ENCODE measurements at regions of chr1 and their contacts with region 1.

Region 1: GRCh38 chr1:1374929-1375662 is at the start of gene AURKAIP1:
- DNase-seq: peak; percentile 88
- ATAC-seq: peak; percentile 91
- H3K4me3 Mint-ChIP-seq: peak within 1 kb of the TSS; percentile 90
- H3K27ac Mint-ChIP-seq: peak within 1 kb of the TSS; percentile 92
- H3K4me1 Mint-ChIP-seq: peaks cover 23% of the 10 kb centered on the region
- H3K27me3 Mint-ChIP-seq: no peaks in the 10 kb centered on the region
- CTCF ChIP-seq: no peak
- total RNA-seq, gene AURKAIP1: 91.5 and 105 TPM in 2 replicates

Region 2: GRCh38 chr1:983799-984473 is 391.2 kb before region 1 on chr1:
- CTCF ChIA-PET with region 1: interaction called, 10 read pairs
- POLR2A ChIA-PET with region 1: no interaction called
- intact Hi-C with region 1: no loop called
- DNase-seq: peak; percentile 66
- ATAC-seq: peak; percentile 95
- H3K4me3 Mint-ChIP-seq: no peak overlapping the region
- H3K27ac Mint-ChIP-seq: no peak overlapping the region
- H3K4me1 Mint-ChIP-seq: no peaks in the 10 kb centered on the region
- H3K27me3 Mint-ChIP-seq: peaks cover 23% of the 10 kb centered on the region
- CTCF ChIP-seq: peak; percentile 39

Region 3: DNA sequence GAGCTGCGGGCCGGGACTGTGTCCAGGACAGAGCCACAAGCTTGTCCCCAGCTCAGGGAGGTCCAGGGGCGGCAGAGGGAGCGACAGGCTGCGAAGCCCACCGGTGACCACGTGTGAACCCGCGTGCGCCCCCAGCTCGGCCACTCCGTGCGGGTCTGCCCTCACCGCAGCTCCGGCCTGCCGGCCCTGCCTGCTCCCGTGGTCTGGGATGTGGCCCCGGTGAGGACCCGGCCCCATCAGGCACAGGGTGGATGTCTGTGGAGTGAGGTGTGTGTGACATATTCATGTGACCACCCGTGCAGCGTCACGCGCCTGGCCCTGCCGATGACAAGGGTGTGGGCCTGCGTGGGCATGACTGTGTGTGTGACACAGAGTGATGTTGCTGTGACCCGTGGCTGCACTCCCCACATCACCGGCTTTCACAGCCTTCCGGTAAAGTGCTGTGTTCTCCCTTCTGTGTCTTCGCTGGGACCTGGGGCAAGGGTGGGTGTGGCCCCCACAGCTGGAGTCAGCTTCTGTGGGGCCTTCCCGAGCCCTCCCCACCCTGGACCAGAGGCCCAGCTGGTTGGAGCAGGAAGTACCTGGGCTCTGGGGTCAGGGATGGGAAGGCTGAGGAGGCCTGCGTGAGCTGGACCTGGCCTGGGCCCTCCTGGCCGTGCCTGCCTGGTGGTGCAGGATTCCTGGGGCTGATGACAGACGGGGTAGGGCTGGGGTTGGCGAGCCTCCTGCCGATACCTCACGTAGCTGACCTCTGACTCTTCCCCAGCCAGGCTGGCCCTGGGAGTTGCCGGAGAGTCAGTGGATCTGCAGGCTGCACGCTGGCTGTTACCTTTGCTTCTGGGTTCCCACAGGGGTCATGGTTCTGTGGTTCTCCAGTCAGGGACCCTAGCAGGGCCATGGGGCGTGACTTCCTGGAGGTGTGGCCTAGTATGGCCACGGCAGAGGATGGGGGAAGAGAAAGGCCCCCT is 305.1 kb before region 1 on chr1:
- CTCF ChIA-PET with region 1: no interaction called
- POLR2A ChIA-PET with region 1: no interaction called
- intact Hi-C with region 1: no loop called
- DNase-seq: peak; percentile 45
- ATAC-seq: peak; percentile 19
- H3K4me3 Mint-ChIP-seq: peak overlapping the region; percentile 66
- H3K27ac Mint-ChIP-seq: peak overlapping the region; percentile 81
- H3K4me1 Mint-ChIP-seq: peaks cover 33% of the 10 kb centered on the region
- H3K27me3 Mint-ChIP-seq: peaks cover 7% of the 10 kb centered on the region
- CTCF ChIP-seq: no peak

Region 4: GRCh38 chr1:1115786-1116700 is 259.1 kb before region 1 on chr1 and contains the start of gene C1orf159:
- CTCF ChIA-PET with region 1: no interaction called
- POLR2A ChIA-PET with region 1: interaction called, 4 read pairs
- intact Hi-C with region 1: loop called (anchors 1 kb)
- DNase-seq: peak; percentile 99
- ATAC-seq: peak; percentile 92
- H3K4me3 Mint-ChIP-seq: peak within 1 kb of the TSS; percentile 88
- H3K27ac Mint-ChIP-seq: peak within 1 kb of the TSS; percentile 80
- H3K4me1 Mint-ChIP-seq: peaks cover 9% of the 10 kb centered on the region
- H3K27me3 Mint-ChIP-seq: peaks cover 5% of the 10 kb centered on the region
- CTCF ChIP-seq: no peak
- total RNA-seq, gene C1orf159: 20.8 and 26.5 TPM in 2 replicates

Region 5: DNA sequence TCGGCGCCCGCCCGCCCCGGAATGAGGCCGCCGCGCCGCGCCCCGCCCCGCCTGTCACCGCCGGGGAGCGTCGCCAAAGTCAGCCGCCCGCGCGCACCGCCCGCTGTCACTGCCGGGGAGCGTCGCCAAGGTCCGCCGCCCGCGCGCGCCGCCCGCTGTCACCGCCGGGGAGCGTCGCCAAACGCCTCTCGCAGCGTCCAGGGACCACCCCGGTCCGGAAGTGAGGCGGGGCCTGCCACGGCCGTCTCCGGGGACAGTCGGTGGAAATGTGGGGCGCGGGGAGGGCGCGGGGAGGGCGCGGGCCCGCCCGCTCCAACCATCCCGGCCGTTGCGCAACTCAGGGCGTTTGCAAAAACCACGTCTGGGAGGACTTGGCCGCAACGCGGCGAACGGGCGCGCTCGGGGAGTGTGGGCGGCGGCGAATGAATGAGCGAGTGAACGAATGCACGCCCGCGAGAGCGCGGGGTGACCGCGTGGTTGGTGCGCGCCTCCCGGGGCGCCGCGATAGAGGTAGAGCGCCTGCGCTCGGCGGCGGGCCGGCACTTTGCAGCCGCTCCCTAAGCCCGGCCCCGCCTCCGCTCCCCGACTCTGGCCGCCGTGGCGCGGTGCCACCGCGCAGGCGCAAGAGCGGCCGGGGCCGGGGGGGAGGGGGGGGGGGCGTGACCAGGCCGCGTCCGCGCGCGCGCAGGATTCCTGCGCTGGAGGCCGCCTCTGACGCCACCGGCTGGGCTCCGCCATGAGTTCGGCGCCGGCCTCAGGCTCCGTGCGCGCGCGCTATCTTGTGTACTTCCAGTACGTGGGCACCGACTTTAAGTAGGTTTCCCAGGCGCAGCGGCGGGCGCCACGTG is 67.0 kb before region 1 on chr1 and contains the starts of genes ACAP3 and PUSL1:
- CTCF ChIA-PET with region 1: no interaction called
- POLR2A ChIA-PET with region 1: interaction called, 4 read pairs
- intact Hi-C with region 1: loop called (anchors 1 kb)
- DNase-seq: peak; percentile 88
- ATAC-seq: peak; percentile 68
- H3K4me3 Mint-ChIP-seq: peak within 1 kb of the TSS; percentile 86
- H3K27ac Mint-ChIP-seq: peak within 1 kb of the TSS; percentile 87
- H3K4me1 Mint-ChIP-seq: peaks cover 38% of the 10 kb centered on the region
- H3K27me3 Mint-ChIP-seq: no peaks in the 10 kb centered on the region
- CTCF ChIP-seq: no peak
- total RNA-seq, gene ACAP3: 16.2 and 26.1 TPM in 2 replicates
- total RNA-seq, gene PUSL1: 11.9 and 12.6 TPM in 2 replicates

Region 6: DNA sequence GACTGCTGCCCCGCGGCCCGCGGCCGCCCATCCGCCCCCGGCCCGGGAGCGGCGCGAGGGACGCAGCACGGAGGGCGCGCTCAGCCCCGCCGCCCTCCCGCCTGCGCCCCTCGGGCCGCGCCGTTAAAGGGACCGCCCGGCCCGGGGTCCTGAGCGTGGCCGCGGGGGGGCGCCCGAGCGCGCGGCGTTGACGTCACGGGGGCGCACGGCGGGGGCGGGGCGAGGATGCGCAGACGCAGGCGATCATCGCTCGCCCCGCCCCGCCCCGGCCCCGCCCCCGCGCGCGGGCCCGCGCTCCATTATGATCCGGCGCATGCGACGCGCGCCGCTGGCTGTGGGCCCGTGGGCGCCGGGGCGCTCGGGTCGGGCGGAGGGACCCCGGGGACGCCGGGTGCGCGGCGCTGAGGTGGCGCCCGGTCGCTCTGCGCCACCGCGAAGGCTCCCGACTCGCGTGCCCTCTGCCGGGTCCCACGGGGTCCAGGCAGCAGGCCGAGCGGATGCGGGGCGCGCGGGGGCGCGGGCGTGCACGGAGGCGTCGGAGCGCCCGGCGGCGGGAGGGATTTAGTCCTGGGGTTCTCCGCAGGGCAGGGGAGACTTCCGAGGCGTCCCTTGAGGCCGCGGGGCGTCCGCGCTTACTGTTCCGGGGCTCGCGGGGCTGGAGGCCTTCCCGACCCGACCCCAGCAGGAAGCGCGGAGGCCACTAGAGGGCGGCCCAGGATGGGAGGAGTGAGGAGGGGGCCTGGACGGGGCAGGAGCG is 25.7 kb before region 1 on chr1 and contains the start of gene DVL1:
- CTCF ChIA-PET with region 1: interaction called, 4 read pairs
- POLR2A ChIA-PET with region 1: interaction called, 10 read pairs
- intact Hi-C with region 1: loop called (anchors 1 kb)
- DNase-seq: peak; percentile 75
- ATAC-seq: peak; percentile 84
- H3K4me3 Mint-ChIP-seq: peak within 1 kb of the TSS; percentile 77
- H3K27ac Mint-ChIP-seq: no peak within 1 kb of the TSS
- H3K4me1 Mint-ChIP-seq: peaks cover 30% of the 10 kb centered on the region
- H3K27me3 Mint-ChIP-seq: peaks cover 12% of the 10 kb centered on the region
- CTCF ChIP-seq: no peak
- total RNA-seq, gene DVL1: 29.3 and 30.7 TPM in 2 replicates

Region 7: GRCh38 chr1:1406817-1407635 is 31.9 kb after region 1 on chr1 and contains the start of gene MRPL20:
- CTCF ChIA-PET with region 1: interaction called, 3 read pairs
- POLR2A ChIA-PET with region 1: interaction called, 44 read pairs
- intact Hi-C with region 1: loop called (anchors 1 kb)
- DNase-seq: peak; percentile 92
- ATAC-seq: peak; percentile 93
- H3K4me3 Mint-ChIP-seq: peak within 1 kb of the TSS; percentile 92
- H3K27ac Mint-ChIP-seq: peak within 1 kb of the TSS; percentile 89
- H3K4me1 Mint-ChIP-seq: peaks cover 38% of the 10 kb centered on the region
- H3K27me3 Mint-ChIP-seq: no peaks in the 10 kb centered on the region
- CTCF ChIP-seq: no peak
- total RNA-seq, gene MRPL20: 134 and 136 TPM in 2 replicates

Region 8: GRCh38 chr1:1615256-1616044 is 240.4 kb after region 1 on chr1 and contains the start of gene MIB2:
- CTCF ChIA-PET with region 1: no interaction called
- POLR2A ChIA-PET with region 1: no interaction called
- intact Hi-C with region 1: loop called (anchors 1 kb)
- DNase-seq: peak; percentile 100
- ATAC-seq: peak; percentile 91
- H3K4me3 Mint-ChIP-seq: peak within 1 kb of the TSS; percentile 90
- H3K27ac Mint-ChIP-seq: peak within 1 kb of the TSS; percentile 86
- H3K4me1 Mint-ChIP-seq: peaks cover 26% of the 10 kb centered on the region
- H3K27me3 Mint-ChIP-seq: no peaks in the 10 kb centered on the region
- CTCF ChIP-seq: no peak
- total RNA-seq, gene MIB2: 27.6 and 36.4 TPM in 2 replicates